ENCODE measurements at regions of chr1 and their contacts with region 1.

Region 1: GRCh38 chr1:44594871-44595746 is 79.2 kb downstream of the TMEM53 start:
- DNase-seq: peak; percentile 95
- ATAC-seq: peak; percentile 87
- H3K4me3 Mint-ChIP-seq: no peak overlapping the region
- H3K27ac Mint-ChIP-seq: no peak overlapping the region
- H3K4me1 Mint-ChIP-seq: peaks cover 29% of the 10 kb centered on the region
- H3K27me3 Mint-ChIP-seq: peaks cover 2% of the 10 kb centered on the region; the same call in 1 of the 2 replicates
- CTCF ChIP-seq: peak; percentile 98

Region 2: GRCh38 chr1:44305962-44306422 is 289.1 kb before region 1 on chr1:
- CTCF ChIA-PET with region 1: no interaction called
- POLR2A ChIA-PET with region 1: no interaction called
- DNase-seq: no peak
- ATAC-seq: no peak
- H3K4me3 Mint-ChIP-seq: no peak overlapping the region
- H3K27ac Mint-ChIP-seq: no peak overlapping the region
- H3K4me1 Mint-ChIP-seq: 0 out of 2 replicates have a peak, but pooled peaks cover 4% of the 10 kb centered on the region
- H3K27me3 Mint-ChIP-seq: no peaks in the 10 kb centered on the region
- CTCF ChIP-seq: no peak

Region 3: DNA sequence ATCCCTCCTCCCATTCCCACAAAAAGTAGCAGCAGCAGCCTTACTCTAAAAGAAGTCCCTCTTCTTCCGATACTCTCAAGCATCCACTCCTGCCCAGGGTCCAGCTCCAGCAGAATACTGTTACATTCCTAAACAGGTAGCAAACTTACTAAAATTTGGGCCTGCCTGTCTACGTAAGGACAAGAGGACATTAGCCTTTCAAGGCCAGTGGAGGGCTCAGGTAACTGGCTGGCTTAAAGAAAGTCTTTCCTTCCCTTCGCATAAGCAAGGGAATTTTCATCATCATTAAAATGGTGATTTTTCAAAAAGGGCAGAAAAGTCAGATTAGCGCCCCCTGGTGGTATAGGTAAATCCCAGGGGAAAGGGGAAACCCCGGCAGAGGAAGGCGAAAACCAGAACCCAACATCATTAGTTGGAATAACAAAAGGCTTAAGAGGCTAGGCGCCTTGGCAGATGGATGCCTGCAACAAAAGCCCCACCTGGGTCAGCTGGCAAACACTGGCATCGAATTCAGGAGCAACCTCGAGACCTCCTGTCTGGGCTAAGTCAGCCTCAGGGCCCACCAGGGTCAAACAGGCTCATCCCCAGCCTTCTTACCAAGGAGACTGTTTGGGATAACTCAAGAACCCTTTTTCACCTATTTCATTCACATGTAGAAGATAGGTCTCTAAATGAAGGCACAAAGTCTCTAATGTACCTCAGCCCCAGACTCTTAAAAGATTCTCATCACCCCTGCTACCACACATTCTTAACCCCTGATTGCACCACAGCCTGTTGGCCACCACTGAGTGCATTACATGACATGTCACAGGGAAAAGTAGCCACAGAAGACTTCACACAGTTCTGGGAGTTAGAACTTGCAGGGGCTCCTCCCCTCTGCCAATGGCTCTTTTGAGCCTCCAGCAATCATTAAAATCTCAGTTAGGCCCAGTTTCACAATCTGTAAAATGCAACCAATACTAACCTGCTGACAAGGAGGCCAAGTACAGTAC is 276.7 kb before region 1 on chr1:
- CTCF ChIA-PET with region 1: interaction called, 22 read pairs
- POLR2A ChIA-PET with region 1: no interaction called
- DNase-seq: peak; percentile 69
- ATAC-seq: peak; percentile 82
- H3K4me3 Mint-ChIP-seq: no peak overlapping the region
- H3K27ac Mint-ChIP-seq: peak overlapping the region; percentile 55; the same call in 1 of the 2 replicates
- H3K4me1 Mint-ChIP-seq: peaks cover 22% of the 10 kb centered on the region
- H3K27me3 Mint-ChIP-seq: no peaks in the 10 kb centered on the region
- CTCF ChIP-seq: peak; percentile 75

Region 4: GRCh38 chr1:44500181-44501046 is 94.7 kb before region 1 on chr1:
- CTCF ChIA-PET with region 1: interaction called, 26 read pairs
- POLR2A ChIA-PET with region 1: no interaction called
- DNase-seq: peak; percentile 62
- ATAC-seq: peak; percentile 72
- H3K4me3 Mint-ChIP-seq: no peak overlapping the region
- H3K27ac Mint-ChIP-seq: no peak overlapping the region
- H3K4me1 Mint-ChIP-seq: peaks cover 40% of the 10 kb centered on the region
- H3K27me3 Mint-ChIP-seq: peaks cover 3% of the 10 kb centered on the region
- CTCF ChIP-seq: 0 out of 2 replicates have a peak, but pooled peaks have one; percentile 12

Region 5: DNA sequence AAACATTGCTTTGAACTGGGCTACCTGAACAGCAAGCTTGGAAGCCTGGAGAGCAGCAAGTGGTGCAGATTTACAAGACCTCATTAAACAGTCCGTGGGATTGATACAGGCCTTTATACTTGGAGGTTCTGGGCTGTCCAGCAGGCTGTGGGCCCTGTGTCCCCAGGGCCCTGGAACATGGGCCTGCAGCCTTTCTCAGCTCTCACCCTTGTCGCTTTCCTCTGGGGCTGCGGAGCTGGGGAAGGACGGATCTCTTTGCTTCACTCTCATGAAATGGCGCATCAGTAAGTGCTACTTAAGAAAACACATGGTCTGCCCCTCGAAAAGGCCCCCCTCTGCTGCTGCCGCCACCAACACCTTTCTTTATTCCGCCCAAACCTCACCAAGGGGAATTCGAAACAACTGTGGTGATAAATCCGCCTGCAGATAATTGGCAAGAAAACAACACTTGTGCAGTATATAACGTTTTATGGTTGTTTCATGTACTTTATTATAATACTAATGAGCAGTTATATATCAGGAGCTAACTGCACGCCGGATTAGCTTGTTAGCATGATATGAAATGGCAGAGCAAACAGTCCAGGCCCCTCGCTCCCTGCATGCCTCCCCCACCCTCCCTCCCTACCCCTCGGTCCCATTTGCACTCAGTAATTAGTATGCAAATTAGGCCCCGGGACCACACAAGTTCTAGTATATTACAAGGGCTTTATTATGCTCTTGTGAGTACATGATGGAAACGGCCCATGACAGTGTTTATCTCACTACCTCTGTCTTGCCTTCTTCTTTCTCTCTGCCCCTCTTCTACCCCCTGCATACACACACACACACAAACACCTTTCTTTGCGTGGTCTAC is 58.5 kb before region 1 on chr1:
- CTCF ChIA-PET with region 1: interaction called, 23 read pairs
- POLR2A ChIA-PET with region 1: interaction called, 3 read pairs
- DNase-seq: no peak
- ATAC-seq: peak; percentile 23
- H3K4me3 Mint-ChIP-seq: peak overlapping the region; percentile 29; the same call in 1 of the 2 replicates
- H3K27ac Mint-ChIP-seq: peak overlapping the region; percentile 84
- H3K4me1 Mint-ChIP-seq: peaks cover 78% of the 10 kb centered on the region
- H3K27me3 Mint-ChIP-seq: peaks cover 7% of the 10 kb centered on the region
- CTCF ChIP-seq: no peak

Region 6: DNA sequence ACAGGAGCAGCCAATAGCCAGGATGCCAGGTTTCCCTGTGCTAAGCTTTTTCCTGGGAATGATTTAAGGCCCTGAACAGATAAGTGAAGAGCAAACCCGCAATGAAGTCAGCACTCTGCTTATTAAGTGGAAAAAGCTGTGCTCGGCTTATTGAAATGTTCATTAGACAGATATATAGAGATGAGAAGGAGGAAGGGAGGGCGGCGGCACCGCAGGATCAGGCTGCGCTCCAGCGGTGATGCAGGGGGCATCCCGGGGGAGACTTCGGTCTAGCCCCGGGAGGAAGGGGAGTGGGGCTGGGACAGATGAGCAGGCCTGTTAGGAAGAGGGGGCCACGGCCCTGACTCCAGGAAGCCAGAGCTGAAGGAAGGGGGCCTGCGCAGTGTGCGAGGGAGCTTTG is 35.8 kb before region 1 on chr1:
- CTCF ChIA-PET with region 1: interaction called, 12 read pairs
- POLR2A ChIA-PET with region 1: no interaction called
- DNase-seq: no peak
- ATAC-seq: no peak
- H3K4me3 Mint-ChIP-seq: no peak overlapping the region
- H3K27ac Mint-ChIP-seq: no peak overlapping the region
- H3K4me1 Mint-ChIP-seq: peaks cover 21% of the 10 kb centered on the region
- H3K27me3 Mint-ChIP-seq: peaks cover 20% of the 10 kb centered on the region
- CTCF ChIP-seq: no peak

Region 7: DNA sequence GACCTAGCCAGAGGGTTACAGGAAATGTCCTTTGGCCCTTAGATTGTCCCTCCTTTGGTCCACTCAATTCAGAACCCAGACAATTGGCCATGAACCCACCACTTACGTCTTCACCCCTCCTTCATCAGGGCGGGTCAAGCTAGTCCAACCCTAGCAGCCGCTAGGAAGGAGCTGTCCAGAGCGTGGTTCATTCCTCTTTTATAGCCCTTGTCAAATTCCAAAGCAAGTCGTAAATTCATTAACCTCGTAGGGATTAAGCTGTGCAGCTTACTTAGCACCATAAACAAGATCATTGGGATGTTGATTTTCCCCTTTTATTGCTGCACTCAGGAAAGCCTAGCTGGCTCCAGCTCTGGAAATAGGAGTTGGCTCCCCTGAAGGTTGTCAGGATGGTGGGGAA is 10.9 kb before region 1 on chr1:
- CTCF ChIA-PET with region 1: interaction called, 18 read pairs
- POLR2A ChIA-PET with region 1: no interaction called
- DNase-seq: no peak
- ATAC-seq: peak; percentile 59
- H3K4me3 Mint-ChIP-seq: no peak overlapping the region
- H3K27ac Mint-ChIP-seq: 0 out of 2 replicates have a peak overlapping the region, but pooled peaks have one; percentile 13
- H3K4me1 Mint-ChIP-seq: peaks cover 17% of the 10 kb centered on the region; the same call in 1 of the 2 replicates
- H3K27me3 Mint-ChIP-seq: no peaks in the 10 kb centered on the region
- CTCF ChIP-seq: no peak

Region 8: GRCh38 chr1:44652445-44653106 is 57.5 kb after region 1 on chr1:
- CTCF ChIA-PET with region 1: interaction called, 27 read pairs
- POLR2A ChIA-PET with region 1: no interaction called
- DNase-seq: peak; percentile 93
- ATAC-seq: peak; percentile 81
- H3K4me3 Mint-ChIP-seq: no peak overlapping the region
- H3K27ac Mint-ChIP-seq: peak overlapping the region; percentile 72
- H3K4me1 Mint-ChIP-seq: peaks cover 26% of the 10 kb centered on the region
- H3K27me3 Mint-ChIP-seq: no peaks in the 10 kb centered on the region
- CTCF ChIP-seq: peak; percentile 94

Region 9: DNA sequence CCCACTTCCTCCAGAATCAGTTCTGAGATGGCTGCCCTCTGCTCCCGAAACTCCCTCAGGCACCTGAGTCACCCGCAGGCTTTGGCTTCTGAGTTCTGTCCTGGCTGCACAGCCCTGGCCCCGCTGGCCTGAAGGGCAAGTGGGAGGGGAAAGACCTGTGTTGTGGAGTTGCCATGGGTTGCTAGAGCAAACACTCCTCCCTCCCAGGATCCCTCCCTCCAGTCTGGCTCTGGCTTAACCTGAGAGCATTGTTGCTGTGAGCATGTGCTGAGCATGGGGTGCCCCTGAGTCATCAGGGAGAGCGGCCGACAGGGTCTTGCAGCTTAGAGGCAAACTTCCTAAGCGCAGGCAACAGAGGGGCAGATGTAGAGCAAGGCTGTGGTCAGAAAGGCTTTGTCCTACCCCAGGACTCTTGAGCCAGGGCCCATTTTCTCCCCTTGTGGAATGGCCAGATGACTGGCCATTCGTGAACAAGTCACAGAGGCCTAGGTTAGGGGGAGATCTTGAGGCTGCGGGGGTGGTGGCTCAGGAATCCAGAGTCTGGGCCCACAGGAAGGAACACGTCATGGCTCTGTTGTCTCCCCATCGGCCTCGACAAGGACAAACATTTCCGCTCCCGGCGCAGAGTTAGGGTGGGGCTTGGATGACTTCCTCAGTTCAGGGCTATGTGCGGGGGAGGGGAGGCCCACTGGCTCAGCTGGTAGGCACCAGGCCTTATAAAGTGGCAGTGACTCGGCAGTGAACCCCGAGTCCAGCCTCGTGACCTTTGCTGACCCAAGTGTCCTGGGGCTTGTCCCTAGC is 212.4 kb after region 1 on chr1 and contains the start of gene DYNLT4:
- CTCF ChIA-PET with region 1: no interaction called
- POLR2A ChIA-PET with region 1: no interaction called
- DNase-seq: peak; percentile 77
- ATAC-seq: peak; percentile 70
- H3K4me3 Mint-ChIP-seq: peak within 1 kb of the TSS; percentile 19; the same call in 1 of the 2 replicates
- H3K27ac Mint-ChIP-seq: peak within 1 kb of the TSS; percentile 100
- H3K4me1 Mint-ChIP-seq: peaks cover 32% of the 10 kb centered on the region
- H3K27me3 Mint-ChIP-seq: peaks cover 6% of the 10 kb centered on the region
- CTCF ChIP-seq: no peak
- total RNA-seq, gene DYNLT4: 0.31 to 0.62 TPM (median 0.57 TPM) in 3 replicates